Activated CD4-positive, alpha-beta memory T cell treated with anti-CD3 and anti-CD28 coated beads for 36 hours (primary cell): ENCODE measurements at regions of chr17 and their contacts with region 1.

Region 1: GRCh38 chr17:40026816-40027613 is 11.8 kb downstream of the CSF3 start:
- DNase-seq: peak; percentile 82
- H3K4me3 Mint-ChIP-seq: no peak overlapping the region
- H3K27ac Mint-ChIP-seq: no peak overlapping the region
- H3K4me1 Mint-ChIP-seq: peaks cover 21% of the 10 kb centered on the region
- H3K27me3 Mint-ChIP-seq: no peaks in the 10 kb centered on the region

Region 2: DNA sequence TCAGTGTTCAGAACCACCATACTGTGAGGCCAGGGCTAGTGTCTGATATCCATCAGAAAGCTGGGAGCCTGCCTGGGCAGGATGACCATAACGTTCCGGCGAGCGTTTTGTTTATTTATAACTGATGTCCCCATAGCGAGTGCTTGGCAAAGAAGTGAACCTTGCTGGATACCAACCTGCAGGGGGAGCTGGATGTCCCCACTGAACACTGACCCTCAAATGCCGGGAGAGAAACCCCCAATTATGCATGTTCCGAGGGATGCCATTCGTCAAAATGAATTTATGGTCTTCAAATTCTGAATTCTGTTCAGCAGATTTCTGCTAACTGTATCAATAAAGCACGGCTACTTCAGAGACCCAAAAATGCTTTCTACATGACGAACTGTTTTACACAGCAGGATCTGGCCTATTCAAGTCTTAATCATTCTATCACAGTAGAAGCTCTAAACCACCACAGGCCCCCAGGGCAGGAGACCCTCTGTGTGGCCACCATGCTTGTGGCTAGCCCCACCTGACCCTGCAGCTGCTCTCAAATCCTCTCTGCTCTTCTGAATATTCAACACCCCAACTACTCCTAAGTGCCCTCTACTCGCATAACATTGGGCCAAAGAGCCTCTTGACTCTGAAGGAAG is 12.0 kb after region 1 on chr17:
- CTCF ChIA-PET with region 1: interaction called, 10 read pairs
- POLR2A ChIA-PET with region 1: no interaction called
- intact Hi-C with region 1: no loop called
- DNase-seq: no peak
- H3K4me3 Mint-ChIP-seq: no peak overlapping the region
- H3K27ac Mint-ChIP-seq: no peak overlapping the region
- H3K4me1 Mint-ChIP-seq: no peaks in the 10 kb centered on the region
- H3K27me3 Mint-ChIP-seq: no peaks in the 10 kb centered on the region

Region 3: DNA sequence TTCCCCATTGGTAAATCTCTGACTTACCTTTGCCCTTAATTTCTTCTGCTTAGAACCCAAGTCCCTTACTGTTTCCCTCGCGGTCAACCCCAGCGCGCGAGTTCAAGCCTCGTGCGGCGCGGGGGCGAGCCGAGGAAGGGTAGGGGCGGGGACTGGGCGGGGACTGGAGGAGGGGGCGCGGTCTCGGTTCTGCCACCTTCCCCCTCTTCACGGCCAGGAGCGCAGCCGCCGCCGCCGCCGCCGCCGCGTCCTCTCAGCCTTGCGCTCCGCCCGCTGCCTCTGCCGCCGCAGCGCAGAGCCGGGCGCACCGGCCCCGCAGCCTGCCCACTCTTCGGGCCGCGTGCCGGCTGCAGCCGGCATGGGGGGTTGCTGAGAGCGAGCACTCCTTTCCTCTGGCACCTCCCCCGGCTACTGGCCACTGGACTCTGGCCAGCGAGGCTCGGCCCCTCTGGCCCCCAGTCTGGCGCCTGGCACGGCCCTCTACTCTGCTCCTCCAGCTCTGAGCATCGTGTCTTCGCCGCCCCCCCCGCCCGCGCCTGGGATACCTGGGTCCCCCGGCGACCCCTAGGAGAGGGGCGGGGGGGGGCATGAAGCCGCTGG is 150.4 kb after region 1 on chr17 and contains the start of gene RAPGEFL1:
- CTCF ChIA-PET with region 1: interaction called, 7 read pairs
- POLR2A ChIA-PET with region 1: interaction called, 3 read pairs
- intact Hi-C with region 1: loop called (anchors 10 kb)
- DNase-seq: peak; percentile 93
- H3K4me3 Mint-ChIP-seq: peak within 1 kb of the TSS; percentile 34
- H3K27ac Mint-ChIP-seq: no peak within 1 kb of the TSS
- H3K4me1 Mint-ChIP-seq: peaks cover 7% of the 10 kb centered on the region
- H3K27me3 Mint-ChIP-seq: no peaks in the 10 kb centered on the region
- total RNA-seq, gene RAPGEFL1: 4.9 to 6.1 TPM